Calu3 (cell line): ENCODE measurements at regions of chr6 and their contacts with region 1.

Region 1: GRCh38 chr6:51618563-51618962 is 468.9 kb downstream of the PKHD1 start:
- DNase-seq: no peak
- H3K4me3 Mint-ChIP-seq: no peak overlapping the region
- H3K27ac Mint-ChIP-seq: no peak overlapping the region
- H3K4me1 Mint-ChIP-seq: peaks cover 27% of the 10 kb centered on the region
- H3K27me3 Mint-ChIP-seq: no peaks in the 10 kb centered on the region
- CTCF ChIP-seq: no peak

Region 2: GRCh38 chr6:51778666-51779065 is 160.1 kb after region 1 on chr6:
- CTCF ChIA-PET with region 1: no interaction called
- intact Hi-C with region 1: loop called (anchors 10 kb)
- DNase-seq: no peak
- H3K4me3 Mint-ChIP-seq: no peak overlapping the region
- H3K27ac Mint-ChIP-seq: no peak overlapping the region
- H3K4me1 Mint-ChIP-seq: peaks cover 11% of the 10 kb centered on the region
- H3K27me3 Mint-ChIP-seq: no peaks in the 10 kb centered on the region
- CTCF ChIP-seq: no peak